ENCODE measurements at regions of chr2 and their contacts with region 1.

Region 1: GRCh38 chr2:11411768-11412448 is 54.1 kb downstream of the E2F6 start:
- DNase-seq: no peak
- H3K4me3 ChIP-seq: peak overlapping the region in 1 of 2 donors; percentile 14
- H3K27ac ChIP-seq: no peak overlapping the region
- H3K4me1 ChIP-seq: peaks cover 8% of the 10 kb centered on the region
- H3K27me3 ChIP-seq: no peaks in the 10 kb centered on the region
- CTCF ChIP-seq: peak; percentile 48 to 72 (median 49)
- POLR2A ChIP-seq: no peak

Region 2: DNA sequence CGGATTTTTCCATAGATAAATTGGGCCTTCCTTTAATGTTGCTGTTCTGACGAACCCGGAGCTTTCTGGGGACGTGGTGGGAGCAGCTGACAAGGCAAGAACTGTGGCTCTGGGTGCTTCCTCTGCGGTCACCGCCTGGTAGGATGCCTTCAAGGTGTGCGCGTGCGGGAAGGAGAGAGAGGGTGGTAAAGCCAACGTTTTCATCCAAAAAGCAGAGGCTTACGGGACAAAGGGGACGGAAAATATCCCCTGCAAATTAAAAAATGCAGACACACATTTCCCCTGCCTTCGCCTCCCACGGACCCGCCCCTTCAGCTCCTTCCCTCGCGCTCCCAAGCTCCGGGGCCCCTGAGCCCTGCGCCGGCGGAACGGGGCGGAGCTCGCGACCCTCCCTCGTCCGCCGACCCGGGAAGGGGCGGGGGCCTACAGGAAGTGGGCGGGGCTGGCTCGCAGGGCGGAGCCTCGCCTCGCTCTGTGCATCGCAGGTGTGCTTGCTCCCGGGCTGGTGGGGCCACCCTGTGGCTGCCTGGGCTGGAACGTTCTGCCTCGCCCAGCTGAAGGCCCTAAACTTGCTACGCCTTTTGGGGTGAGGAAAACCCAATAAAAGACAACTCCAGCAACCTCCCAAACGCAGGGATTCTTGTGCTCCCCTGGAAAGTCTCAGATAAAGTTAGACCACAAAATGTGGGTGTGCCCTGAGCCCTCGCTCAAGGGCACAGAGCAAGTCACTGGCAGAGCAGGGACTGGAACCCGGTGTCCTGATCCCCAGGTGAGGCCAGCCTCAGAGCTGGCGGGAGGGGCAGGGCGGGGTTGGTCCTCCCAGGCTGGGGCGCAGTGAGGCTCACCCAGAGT is 282.1 kb before region 1 on chr2:
- intact Hi-C with region 1: loop called (anchors 5 kb)
- DNase-seq: no peak
- H3K4me3 ChIP-seq: peak overlapping the region; percentile 37 to 43
- H3K27ac ChIP-seq: no peak overlapping the region
- H3K4me1 ChIP-seq: peaks cover 35% of the 10 kb centered on the region
- H3K27me3 ChIP-seq: no peaks in the 10 kb centered on the region
- CTCF ChIP-seq: peak in 1 of 3 experiments; percentile 3
- POLR2A ChIP-seq: no peak

Region 3: DNA sequence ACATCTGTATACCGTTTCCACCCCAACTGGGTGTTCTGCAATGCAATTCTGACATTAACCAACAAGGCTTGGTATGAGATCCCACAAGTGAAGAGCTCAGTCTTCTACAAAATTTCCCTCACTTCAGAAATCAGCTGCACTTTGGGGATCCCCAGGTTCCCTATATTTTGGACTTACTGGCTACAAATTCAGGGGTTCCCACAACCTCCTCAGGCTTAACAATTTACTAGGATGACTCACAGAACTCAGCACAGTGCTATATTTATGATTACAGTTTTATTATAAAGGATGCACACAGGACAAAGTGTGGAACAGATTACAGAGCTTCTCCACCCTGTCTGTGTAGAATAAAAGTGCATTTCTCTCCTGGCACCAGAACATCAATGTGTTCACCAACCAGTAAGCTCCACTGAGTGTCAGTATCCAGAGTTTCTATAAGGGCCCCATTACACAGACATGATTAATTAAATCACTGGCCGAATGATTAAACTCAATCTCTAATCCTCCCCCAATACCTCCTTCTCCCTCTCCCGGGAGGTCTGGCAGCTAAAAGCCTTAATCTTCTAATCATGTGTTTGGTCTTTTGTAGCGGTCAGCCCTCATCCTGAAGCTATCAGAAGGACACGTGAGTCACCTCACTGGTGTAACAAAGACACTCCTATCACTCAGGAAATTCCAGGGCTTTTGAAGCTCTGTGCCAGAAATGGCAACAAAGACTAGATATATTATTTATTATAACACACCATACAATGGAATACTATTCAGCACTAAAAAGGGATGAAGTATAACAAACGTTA is 172.0 kb before region 1 on chr2:
- intact Hi-C with region 1: loop called (anchors 5 kb)
- DNase-seq: no peak
- H3K4me3 ChIP-seq: no peak overlapping the region
- H3K27ac ChIP-seq: no peak overlapping the region
- H3K4me1 ChIP-seq: peaks cover 10% of the 10 kb centered on the region
- H3K27me3 ChIP-seq: no peaks in the 10 kb centered on the region
- CTCF ChIP-seq: no peak
- POLR2A ChIP-seq: no peak

Region 4: GRCh38 chr2:11344342-11344955 is 67.5 kb before region 1 on chr2 and contains the start of gene ROCK2:
- intact Hi-C with region 1: loop called (anchors 5 kb)
- DNase-seq: no peak
- H3K4me3 ChIP-seq: peak within 1 kb of the TSS; percentile 82 to 96
- H3K27ac ChIP-seq: peak within 1 kb of the TSS; percentile 98
- H3K4me1 ChIP-seq: peaks cover 45% of the 10 kb centered on the region
- H3K27me3 ChIP-seq: no peaks in the 10 kb centered on the region
- CTCF ChIP-seq: no peak
- POLR2A ChIP-seq: peak in 1 of 2 donors; percentile 79
- total RNA-seq, gene ROCK2: 49.4 TPM

Region 5: GRCh38 chr2:11482723-11483518 is 71.0 kb after region 1 on chr2:
- intact Hi-C with region 1: no loop called
- DNase-seq: no peak
- H3K4me3 ChIP-seq: peak overlapping the region; percentile 63 to 95
- H3K27ac ChIP-seq: peak overlapping the region; percentile 86
- H3K4me1 ChIP-seq: peaks cover 27% of the 10 kb centered on the region
- H3K27me3 ChIP-seq: no peaks in the 10 kb centered on the region
- CTCF ChIP-seq: no peak
- POLR2A ChIP-seq: peak in 1 of 2 donors; percentile 3

Region 6: DNA sequence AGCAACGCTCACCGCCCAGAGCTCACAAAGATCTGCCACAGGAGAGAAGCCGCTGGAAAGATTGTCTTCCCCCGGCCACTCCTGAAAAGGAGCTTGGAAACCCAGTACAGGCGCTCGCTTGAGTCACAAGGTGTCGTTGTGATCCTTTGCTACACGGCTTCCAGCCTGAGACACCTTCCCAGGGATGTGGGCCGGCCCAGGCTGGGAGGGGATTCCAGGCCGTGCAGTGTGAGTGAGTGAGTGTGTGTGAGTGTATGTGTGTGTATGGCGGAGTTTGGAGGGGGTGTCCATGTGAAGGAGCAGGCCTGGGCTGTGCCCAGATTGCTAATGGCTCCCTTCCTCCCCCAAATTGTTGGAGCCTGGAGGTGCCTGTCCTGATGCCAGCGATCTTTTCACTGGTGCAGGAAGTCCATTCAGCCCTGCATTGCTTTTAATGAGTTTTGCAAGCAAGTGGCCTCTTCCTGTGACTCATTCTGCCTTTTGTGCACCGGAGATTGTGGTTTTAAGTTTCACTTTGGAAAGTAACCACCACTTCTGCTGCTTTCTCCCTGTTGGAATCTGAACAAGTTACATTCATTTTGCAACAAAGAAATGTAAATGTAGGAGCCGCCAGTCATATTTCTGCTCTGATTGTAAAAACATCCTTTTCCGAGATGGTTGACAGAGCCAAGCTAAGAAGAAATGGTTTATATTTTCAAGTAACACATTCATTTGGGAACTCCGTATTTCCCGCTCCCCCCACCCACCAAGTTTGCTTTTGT is 418.2 kb after region 1 on chr2:
- intact Hi-C with region 1: no loop called
- DNase-seq: peak in 1 of 2 donors; percentile 94
- H3K4me3 ChIP-seq: peak overlapping the region; percentile 11 to 29
- H3K27ac ChIP-seq: peak overlapping the region; percentile 57
- H3K4me1 ChIP-seq: peaks cover 22% of the 10 kb centered on the region
- H3K27me3 ChIP-seq: no peaks in the 10 kb centered on the region
- CTCF ChIP-seq: no peak
- POLR2A ChIP-seq: no peak

Measured in vagina (tissue), 2 donors.